Panc1 (cell line): ENCODE measurements at regions of chr9 and their contacts with region 1.

Region 1: GRCh38 chr9:12819436-12820185 is 44.8 kb downstream of the LURAP1L start:
- DNase-seq: no peak
- ATAC-seq: no peak
- H3K4me3 ChIP-seq: no peak overlapping the region
- H3K27ac ChIP-seq: peak overlapping the region; percentile 88; the same call in 1 of the 2 replicates
- H3K4me1 ChIP-seq: peaks cover 17% of the 10 kb centered on the region
- H3K27me3 ChIP-seq: no peaks in the 10 kb centered on the region
- CTCF ChIP-seq: peak; percentile 46

Region 2: DNA sequence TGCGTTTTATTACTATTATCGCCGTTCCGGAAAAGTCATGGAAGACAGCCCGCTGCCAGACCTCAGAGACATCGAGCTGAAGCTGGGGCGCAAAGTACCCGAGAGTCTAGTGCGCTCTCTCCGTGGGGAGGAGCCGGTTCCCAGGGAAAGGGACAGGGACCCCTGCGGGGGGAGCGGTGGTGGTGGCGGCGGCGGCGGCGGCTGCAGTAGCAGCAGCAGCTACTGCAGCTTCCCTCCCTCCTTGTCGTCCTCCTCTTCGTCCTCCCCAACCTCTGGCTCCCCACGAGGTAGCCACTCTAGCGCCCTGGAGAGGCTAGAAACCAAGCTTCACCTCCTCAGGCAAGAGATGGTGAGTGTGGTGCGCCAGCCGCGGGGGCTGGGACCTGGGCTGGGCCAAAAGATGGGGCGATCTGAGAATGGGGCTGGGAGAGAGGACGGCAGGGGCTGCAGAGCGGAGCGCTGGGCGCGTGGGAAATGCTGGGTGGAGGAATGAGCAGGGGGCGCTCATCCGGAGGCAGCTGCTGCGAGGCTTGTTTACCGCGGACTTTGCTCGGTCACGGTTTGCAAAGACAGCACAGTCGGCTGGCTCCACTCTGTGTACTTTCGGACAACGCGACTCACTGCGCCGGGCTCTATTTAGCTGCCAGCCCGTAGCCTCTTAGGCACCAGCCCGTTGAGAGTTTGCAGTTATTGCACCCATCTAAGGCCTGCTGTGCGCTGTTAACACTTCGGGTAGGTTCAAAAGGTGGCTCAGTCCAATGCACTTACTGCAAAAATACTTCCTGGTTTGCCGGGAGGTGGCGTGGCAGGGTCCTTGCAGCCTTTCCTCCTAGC is 43.7 kb before region 1 on chr9:
- CTCF ChIA-PET with region 1: interaction called, 3 read pairs
- POLR2A ChIA-PET with region 1: no interaction called
- in situ Hi-C with region 1: no loop called
- intact Hi-C with region 1: loop called (anchors 5 kb)
- DNase-seq: no peak
- ATAC-seq: peak; percentile 88
- H3K4me3 ChIP-seq: peak overlapping the region; percentile 71 to 82
- H3K27ac ChIP-seq: peak overlapping the region; percentile 82
- H3K4me1 ChIP-seq: peaks cover 3% of the 10 kb centered on the region
- H3K27me3 ChIP-seq: no peaks in the 10 kb centered on the region
- CTCF ChIP-seq: peak; percentile 54

Region 3: GRCh38 chr9:12784461-12785259 is 35.0 kb before region 1 on chr9:
- CTCF ChIA-PET with region 1: no interaction called
- POLR2A ChIA-PET with region 1: interaction called, 12 read pairs
- in situ Hi-C with region 1: no loop called
- intact Hi-C with region 1: loop called (anchors 5 kb)
- DNase-seq: no peak
- ATAC-seq: peak; percentile 96
- H3K4me3 ChIP-seq: peak overlapping the region in 1 of 2 experiments; percentile 35; a peak in 2 of 4 replicates
- H3K27ac ChIP-seq: peak overlapping the region; percentile 88
- H3K4me1 ChIP-seq: peaks cover 13% of the 10 kb centered on the region; the same call in 1 of the 2 replicates
- H3K27me3 ChIP-seq: no peaks in the 10 kb centered on the region
- CTCF ChIP-seq: no peak